ENCODE measurements at regions of chr3 and their contacts with region 1.

Region 1: DNA sequence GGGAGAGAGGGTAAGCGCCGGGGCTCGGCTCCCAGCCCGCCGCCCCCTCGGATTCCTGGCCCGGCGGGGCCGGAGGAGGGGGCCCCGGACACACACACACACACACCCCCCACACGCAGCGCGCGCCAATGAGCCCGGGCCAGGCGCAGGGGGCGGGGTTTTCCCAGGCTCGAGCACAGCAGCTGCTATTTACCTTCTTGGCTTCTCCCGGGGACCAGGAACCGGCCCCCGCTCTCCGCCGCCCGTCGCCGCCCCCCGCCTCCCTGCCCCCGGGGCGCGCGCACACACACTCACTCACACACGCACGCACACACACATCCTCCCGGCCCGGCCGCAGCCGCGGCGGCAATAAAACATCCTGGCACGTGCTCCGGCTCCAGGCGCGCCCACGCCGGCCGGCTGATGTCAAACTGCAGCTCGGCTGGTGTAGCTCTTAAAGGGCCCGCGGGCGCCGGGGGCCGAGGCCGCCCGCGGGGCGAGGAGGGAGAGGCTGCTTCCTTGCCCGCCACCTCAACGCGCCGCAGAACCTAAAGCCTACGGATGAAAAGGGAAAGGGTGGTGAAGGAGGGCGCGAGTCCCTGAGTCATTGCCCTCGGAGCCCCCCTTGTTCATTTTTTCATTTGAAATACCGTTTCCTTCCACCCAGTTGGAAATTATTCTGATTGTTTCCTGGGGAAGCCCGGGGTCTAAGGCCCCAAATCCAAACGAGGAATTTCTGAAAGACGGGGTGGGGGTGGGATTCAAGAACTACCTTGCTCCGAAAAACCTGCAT is 1.0 kb upstream of the HES1 start:
- DNase-seq: peak; percentile 75 to 94 (median 80)
- ATAC-seq: peak; percentile 61
- H3K4me3 ChIP-seq: peak overlapping the region; percentile 56
- H3K27ac ChIP-seq: peak overlapping the region; percentile 85
- H3K4me1 ChIP-seq: peaks cover 26 to 49% of the 10 kb centered on the region in 2 experiments
- H3K27me3 ChIP-seq: no peaks in the 10 kb centered on the region
- CTCF ChIP-seq: no peak
- EP300 ChIP-seq: peak; percentile 67
- POLR2A ChIP-seq: peak; percentile 69
- RAD21 ChIP-seq: peak in 1 of 2 experiments; percentile 21; a peak in 2 of 4 replicates

Region 2: DNA sequence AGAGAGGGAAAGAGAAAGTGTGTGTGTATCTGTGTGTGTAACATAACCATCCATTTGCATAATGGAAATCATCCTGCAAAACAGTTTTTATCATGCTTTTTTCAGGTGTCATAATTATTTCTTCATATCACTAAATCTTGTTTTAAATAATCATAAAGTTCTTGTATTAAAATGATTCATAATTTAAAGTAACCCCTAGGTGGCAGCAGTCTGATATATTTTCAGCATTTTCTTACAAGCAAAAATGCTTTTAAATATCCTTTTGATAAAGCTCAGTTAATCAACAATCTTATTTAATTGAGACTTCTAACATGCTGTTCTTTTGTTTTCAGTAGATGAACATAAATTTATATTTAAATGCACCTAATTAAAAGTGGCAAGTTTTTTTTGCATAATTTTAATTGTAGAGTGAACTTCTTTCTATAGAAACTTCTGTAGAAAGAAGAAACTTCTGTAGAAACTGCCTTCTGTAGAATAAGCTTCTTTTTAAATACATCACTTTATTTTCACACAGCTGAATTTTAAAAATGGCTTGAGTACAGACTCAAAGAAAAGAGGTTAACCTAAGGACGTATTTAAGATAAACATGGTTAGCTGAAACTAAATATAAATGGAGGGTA is 469.5 kb before region 1 on chr3:
- CTCF ChIA-PET with region 1: no interaction called
- POLR2A ChIA-PET with region 1: interaction called, 4 read pairs
- in situ Hi-C with region 1: no loop called
- intact Hi-C with region 1: loop called (anchors 5 kb)
- DNase-seq: peak in 1 of 4 experiments; percentile 34
- ATAC-seq: no peak
- H3K4me3 ChIP-seq: no peak overlapping the region
- H3K27ac ChIP-seq: no peak overlapping the region
- H3K4me1 ChIP-seq: peaks cover 0 to 30% of the 10 kb centered on the region in 2 experiments; a peak in 3 of 5 replicates
- H3K27me3 ChIP-seq: no peaks in the 10 kb centered on the region
- CTCF ChIP-seq: peak in 1 of 3 experiments; percentile 55; a peak in 2 of 6 replicates
- EP300 ChIP-seq: no peak
- POLR2A ChIP-seq: no peak
- RAD21 ChIP-seq: peak; percentile 44 to 53

Region 3: DNA sequence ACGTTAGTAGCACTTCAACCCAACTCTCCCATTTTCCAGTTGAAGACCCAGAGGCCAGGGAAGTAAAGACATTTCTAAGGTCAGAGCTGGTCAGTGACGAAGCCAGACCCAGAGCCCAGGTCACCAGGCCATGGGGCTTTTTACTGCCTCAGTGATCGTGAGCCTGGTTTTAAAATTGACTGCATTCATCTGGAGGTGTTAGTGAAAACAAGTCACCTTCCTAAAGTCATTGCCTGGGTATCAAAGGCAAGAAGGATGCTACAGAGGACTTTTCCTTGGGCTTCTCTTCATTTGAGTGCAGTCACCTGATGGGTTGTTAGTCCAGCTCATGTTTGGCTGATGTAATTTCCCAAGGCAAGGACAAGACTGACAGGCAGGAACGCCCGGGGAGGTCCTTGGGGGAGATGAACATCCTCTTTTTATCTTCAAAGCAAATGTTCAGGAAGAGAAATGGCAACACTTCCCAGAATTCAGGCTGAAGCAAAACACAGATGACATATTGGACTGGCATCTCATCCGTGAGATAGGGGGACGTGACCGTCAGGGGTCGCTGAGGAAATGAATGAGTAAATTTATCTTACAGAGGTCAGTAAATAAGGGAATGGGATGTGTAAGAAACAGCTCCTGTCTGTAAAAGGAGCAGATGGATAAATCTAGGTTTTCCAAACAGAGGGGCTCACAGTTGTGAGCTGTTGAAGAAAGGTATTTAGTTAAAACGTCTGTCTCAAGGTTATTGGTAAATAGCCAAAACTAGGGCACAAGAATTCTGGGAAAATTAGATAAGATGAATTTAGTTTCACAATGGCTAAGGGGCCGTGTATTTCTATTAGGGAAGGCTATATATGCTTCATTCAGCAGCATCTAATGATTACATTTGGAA is 340.7 kb before region 1 on chr3:
- CTCF ChIA-PET with region 1: no interaction called
- POLR2A ChIA-PET with region 1: interaction called, 21 read pairs
- in situ Hi-C with region 1: loop called (anchors 5 kb)
- intact Hi-C with region 1: loop called (anchors 2 kb)
- DNase-seq: peak; percentile 49 to 83 (median 62)
- ATAC-seq: peak; percentile 90
- H3K4me3 ChIP-seq: no peak overlapping the region
- H3K27ac ChIP-seq: peak overlapping the region; percentile 55; the same call in 1 of the 3 replicates
- H3K4me1 ChIP-seq: peaks cover 3 to 23% of the 10 kb centered on the region in 2 experiments; a peak in 3 of 5 replicates
- H3K27me3 ChIP-seq: no peaks in the 10 kb centered on the region
- CTCF ChIP-seq: peak in 2 of 3 experiments; percentile 34 to 42; a peak in 3 of 6 replicates
- EP300 ChIP-seq: peak; percentile 88
- POLR2A ChIP-seq: no peak
- RAD21 ChIP-seq: peak; percentile 33 to 61

Region 4: DNA sequence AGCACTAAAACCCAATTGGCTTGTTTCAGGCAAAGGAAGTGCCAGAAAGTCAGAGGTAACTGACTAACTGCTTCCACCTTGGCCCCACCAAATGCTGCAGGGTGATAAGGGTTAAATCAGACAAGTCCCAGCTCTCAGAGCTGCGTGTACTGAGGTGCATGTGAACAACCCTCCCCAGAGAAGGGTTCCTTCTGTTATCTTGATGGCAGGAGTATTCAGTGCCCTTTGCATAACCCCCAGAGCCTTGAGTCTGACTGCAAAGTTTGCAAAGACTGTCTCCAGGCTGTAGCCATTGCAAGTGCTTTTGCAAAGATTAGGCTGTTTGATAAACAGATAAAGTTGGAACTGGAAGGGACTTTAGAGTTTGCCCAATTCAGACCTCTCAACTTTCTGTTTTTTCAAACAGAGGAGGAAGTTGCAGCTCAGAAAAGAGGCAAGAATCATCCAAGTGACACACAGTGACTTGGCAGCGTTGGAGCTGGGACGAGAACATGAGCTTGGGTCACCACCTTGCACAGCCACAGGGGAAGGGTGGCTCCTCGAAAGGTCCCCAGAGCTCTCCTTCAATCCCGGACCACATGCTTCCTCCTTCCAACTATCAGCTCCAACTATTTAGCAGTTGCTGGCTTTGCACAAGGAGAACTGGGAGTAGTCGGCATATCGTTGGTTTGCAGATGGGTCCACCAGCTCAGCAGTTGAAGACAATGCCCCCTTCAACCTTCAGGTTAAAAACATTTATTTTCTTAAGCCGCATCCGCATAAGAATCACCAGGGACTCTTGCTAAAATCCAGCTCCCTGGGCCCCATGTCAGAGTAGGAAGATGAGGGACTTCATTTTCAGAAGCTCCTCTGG is 223.8 kb before region 1 on chr3:
- CTCF ChIA-PET with region 1: no interaction called
- POLR2A ChIA-PET with region 1: interaction called, 4 read pairs
- in situ Hi-C with region 1: no loop called
- intact Hi-C with region 1: loop called (anchors 5 kb)
- DNase-seq: peak; percentile 48 to 93 (median 68)
- ATAC-seq: peak; percentile 88
- H3K4me3 ChIP-seq: peak overlapping the region; percentile 18; the same call in 1 of the 2 replicates
- H3K27ac ChIP-seq: peak overlapping the region; percentile 92
- H3K4me1 ChIP-seq: peaks cover 30 to 55% of the 10 kb centered on the region in 2 experiments
- H3K27me3 ChIP-seq: no peaks in the 10 kb centered on the region
- CTCF ChIP-seq: no peak; a peak in 1 of 6 replicates
- EP300 ChIP-seq: peak; percentile 97
- POLR2A ChIP-seq: no peak; the same call in 1 of the 2 replicates
- RAD21 ChIP-seq: peak; percentile 60 to 61; a peak in 3 of 4 replicates

Region 5: GRCh38 chr3:194003125-194004057 is 131.6 kb before region 1 on chr3:
- CTCF ChIA-PET with region 1: no interaction called
- POLR2A ChIA-PET with region 1: interaction called, 17 read pairs
- in situ Hi-C with region 1: no loop called
- intact Hi-C with region 1: loop called (anchors 1 kb)
- DNase-seq: peak; percentile 92 to 97 (median 96)
- ATAC-seq: peak; percentile 91
- H3K4me3 ChIP-seq: peak overlapping the region; percentile 31; the same call in 1 of the 2 replicates
- H3K27ac ChIP-seq: peak overlapping the region; percentile 81
- H3K4me1 ChIP-seq: peaks cover 31 to 52% of the 10 kb centered on the region in 2 experiments
- H3K27me3 ChIP-seq: no peaks in the 10 kb centered on the region
- CTCF ChIP-seq: no peak
- EP300 ChIP-seq: peak; percentile 91
- POLR2A ChIP-seq: peak; percentile 40; the same call in 1 of the 2 replicates
- RAD21 ChIP-seq: peak; percentile 44 to 45; a peak in 3 of 4 replicates

Region 6: DNA sequence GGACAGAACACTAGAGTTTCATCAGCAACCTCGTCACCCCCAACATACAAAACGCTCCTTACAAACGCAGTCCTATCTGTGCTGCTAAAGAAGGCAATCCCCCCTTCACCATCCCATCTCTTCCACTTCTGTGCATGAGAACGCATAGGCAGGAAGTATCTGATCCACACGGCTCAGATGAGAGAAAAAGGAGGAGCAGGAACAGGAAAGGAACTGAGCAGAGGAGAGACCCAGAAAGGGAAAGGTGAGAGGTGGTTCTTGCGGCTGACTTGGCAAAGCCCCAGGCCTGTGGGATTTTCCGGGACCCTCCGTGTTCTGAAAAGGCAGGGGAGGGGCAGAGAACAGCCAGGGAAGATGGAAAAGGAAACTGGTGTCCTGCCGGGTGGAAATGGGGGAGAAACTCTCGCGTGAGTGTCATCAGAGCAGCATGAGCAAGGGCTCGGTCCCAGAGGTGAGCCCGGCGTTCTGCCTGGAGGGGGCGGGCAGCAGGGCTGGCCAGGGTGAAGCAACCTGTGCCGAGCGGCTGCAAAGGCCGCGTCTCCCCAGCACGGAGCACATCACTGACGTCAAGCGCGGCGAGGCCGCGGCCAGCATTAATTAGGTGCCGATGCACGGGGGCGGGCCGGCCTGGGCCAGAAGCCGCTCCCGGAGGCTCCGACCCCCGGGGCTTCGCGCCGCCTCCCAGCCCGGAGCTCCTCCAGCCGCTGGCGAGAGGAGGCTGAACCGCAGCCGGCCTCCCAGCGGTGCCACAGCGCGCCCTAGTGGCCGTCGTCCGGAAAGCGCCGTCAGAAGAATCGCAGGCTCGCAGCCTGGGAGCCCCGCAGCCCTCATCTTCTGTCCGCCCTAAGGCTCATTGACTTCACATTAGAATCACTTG is 180.4 kb after region 1 on chr3:
- CTCF ChIA-PET with region 1: no interaction called
- POLR2A ChIA-PET with region 1: interaction called, 48 read pairs
- in situ Hi-C with region 1: no loop called
- intact Hi-C with region 1: loop called (anchors 1 kb)
- DNase-seq: peak; percentile 88 to 93 (median 90)
- ATAC-seq: peak; percentile 93
- H3K4me3 ChIP-seq: peak overlapping the region; percentile 47
- H3K27ac ChIP-seq: peak overlapping the region; percentile 42; the same call in 1 of the 3 replicates
- H3K4me1 ChIP-seq: peaks cover 12 to 14% of the 10 kb centered on the region in 2 experiments
- H3K27me3 ChIP-seq: no peaks in the 10 kb centered on the region
- CTCF ChIP-seq: peak; percentile 87 to 94 (median 92)
- EP300 ChIP-seq: no peak
- POLR2A ChIP-seq: no peak
- RAD21 ChIP-seq: peak; percentile 97 to 99

Region 7: DNA sequence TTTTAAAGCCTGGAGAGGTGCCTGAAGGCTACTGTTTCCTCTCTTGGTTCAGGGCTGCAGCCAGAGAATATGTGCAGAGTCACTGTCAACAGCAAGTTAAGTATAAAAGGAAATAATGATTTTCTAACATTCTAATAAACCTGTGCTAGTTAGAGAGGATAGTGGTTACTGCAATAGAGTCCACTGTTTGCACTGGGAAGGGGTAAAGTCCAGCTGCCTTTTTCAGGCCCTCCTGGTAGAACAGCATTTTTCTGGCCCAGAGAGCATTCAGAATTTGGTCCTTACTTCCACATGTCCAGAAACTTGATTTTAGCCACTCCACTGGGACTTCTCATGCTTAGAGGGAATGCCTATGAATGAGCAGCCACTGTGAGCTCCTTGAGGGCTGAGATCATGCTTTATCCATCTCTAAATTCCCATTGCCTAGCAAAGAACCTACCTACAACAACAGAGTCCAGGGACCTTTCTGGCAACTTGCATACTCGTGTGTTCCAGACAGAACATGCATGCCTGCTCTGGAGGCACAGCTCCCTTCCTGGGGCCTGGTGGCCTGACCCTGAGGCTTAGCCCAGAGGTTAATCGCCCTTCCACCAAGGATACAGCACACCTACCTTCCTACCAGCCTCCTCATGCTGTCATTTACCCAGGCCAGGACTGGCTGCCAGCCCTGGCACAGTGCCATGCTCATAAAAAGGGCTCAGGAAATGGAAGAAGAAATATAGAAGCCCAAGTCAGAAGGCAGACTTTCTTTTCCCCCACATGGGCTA is 402.1 kb after region 1 on chr3:
- CTCF ChIA-PET with region 1: no interaction called
- POLR2A ChIA-PET with region 1: no interaction called
- in situ Hi-C with region 1: no loop called
- intact Hi-C with region 1: no loop called
- DNase-seq: no peak
- ATAC-seq: peak; percentile 47; the same call in 2 of the 3 replicates
- H3K4me3 ChIP-seq: no peak overlapping the region
- H3K27ac ChIP-seq: no peak overlapping the region
- H3K4me1 ChIP-seq: no peaks in the 10 kb centered on the region; a peak in 2 of 5 replicates
- H3K27me3 ChIP-seq: no peaks in the 10 kb centered on the region
- CTCF ChIP-seq: no peak
- EP300 ChIP-seq: no peak
- POLR2A ChIP-seq: no peak
- RAD21 ChIP-seq: no peak

Region 8: DNA sequence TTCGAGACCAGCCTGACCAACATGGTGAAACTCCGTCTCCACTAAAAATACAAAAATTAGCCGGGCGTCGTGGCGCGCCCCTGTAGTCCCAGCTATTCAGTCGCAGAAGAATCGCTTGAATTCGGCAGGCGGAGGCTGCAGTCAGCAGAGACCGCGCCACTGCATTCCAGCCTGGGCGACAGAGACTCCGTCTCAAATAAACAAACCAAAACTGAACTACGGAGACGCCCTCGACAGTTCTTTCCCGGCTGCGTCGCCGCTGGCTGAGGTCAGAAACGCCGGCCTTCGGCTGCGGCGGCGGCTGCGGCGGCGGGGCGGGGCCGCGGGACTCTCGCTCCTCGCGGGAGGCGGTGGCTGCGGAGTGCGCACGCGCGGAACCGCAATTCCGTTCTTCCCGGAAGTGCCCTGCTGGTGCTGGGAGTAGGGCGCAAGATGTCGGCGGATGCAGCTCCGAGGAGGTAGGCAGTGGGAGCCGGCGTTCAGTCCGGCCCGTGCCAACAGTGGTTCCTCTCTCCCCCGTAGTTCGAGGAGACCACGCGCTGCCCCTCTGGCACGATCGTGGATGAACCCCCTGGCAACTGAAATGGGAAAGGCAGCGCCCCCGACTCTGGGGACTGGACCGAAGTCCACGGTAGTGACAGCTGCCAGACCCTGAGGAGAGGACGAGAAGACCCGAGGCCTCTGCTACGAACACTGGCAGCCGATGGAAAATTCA is 448.8 kb after region 1 on chr3:
- CTCF ChIA-PET with region 1: no interaction called
- POLR2A ChIA-PET with region 1: no interaction called
- in situ Hi-C with region 1: no loop called
- intact Hi-C with region 1: no loop called
- DNase-seq: peak; percentile 95 to 98 (median 98)
- ATAC-seq: peak; percentile 93
- H3K4me3 ChIP-seq: peak overlapping the region; percentile 99
- H3K27ac ChIP-seq: peak overlapping the region; percentile 95
- H3K4me1 ChIP-seq: peaks cover 9 to 17% of the 10 kb centered on the region in 2 experiments
- H3K27me3 ChIP-seq: no peaks in the 10 kb centered on the region
- CTCF ChIP-seq: peak in 1 of 3 experiments; percentile 22; a peak in 1 of 6 replicates
- EP300 ChIP-seq: no peak
- POLR2A ChIP-seq: peak; percentile 98
- RAD21 ChIP-seq: 0 out of 4 replicates have a peak, but pooled peaks of 1 of the 2 experiments have one; percentile 2